Astrocyte of the cerebellum (primary cell): ENCODE measurements at regions of chr4 and their contacts with region 1.

Region 1: DNA sequence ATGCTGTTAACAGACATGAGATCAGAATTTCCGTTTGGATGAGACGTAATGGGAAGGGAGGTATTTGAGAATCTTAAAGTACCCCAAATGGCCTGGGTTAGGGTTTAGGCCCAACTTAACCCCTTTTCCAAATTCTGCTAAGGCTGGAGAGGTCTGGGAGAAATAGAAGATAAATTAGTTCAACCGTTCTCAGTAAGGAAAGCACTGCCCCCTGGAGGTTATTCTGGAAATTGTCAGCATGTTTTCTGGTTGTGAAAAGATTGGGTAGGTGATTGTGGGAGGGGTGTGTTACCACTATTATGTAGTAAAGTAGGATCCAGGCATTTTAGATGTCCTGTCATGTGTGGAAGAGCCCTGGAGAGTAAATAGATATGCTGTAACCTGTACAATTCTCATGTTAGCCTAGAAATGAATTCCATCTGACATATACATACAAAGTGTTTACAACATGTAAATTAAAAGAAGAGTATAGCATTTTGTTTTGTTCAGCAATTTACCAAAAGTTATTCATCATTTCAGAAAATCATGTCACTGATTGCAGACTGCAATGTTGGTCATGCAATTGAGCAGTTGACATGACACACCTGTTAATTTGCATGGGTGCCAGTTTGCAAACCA is 26.8 kb upstream of the GRXCR1 start:
- DNase-seq: peak; percentile 28
- H3K4me3 ChIP-seq: no peak overlapping the region
- CTCF ChIP-seq: peak; percentile 73

Region 2: DNA sequence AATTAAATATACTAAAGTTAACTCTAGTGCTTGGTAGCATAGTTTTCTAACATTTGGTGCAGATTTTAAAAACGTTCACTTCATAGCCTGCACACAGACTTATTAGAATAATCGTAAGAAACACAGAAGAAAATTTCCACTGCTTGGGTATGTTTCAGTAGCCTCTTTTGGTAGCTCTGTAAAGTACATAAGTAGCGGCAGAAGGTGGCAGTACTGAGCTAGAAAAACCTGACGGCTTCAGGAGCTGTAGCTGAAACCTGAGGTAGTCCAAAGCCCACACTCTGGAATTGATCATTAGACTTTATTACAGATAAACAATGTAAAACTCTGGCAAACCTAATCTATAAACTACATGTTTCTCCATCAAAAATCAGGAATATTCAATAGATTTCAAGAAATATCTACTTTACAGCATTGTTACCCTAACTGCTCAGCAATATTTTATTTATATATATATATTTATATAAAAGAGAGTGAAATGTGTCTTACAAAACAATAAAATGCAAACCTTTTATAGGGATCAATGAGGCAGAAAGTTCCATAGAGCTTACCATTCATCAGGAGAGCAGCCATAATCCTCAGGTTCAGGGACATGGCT is 297.0 kb before region 1 on chr4:
- in situ Hi-C with region 1: loop called (anchors 25 kb)
- DNase-seq: peak; percentile 60
- H3K4me3 ChIP-seq: no peak overlapping the region
- CTCF ChIP-seq: peak; percentile 68